ENCODE measurements at regions of chr12 and their contacts with region 1.

Region 1: GRCh38 chr12:42495244-42495643 is 94.3 kb downstream of the PRICKLE1 start:
- DNase-seq: no peak
- H3K4me3 ChIP-seq: no peak overlapping the region
- H3K27ac ChIP-seq: no peak overlapping the region
- H3K27me3 ChIP-seq: no peaks in the 10 kb centered on the region
- CTCF ChIP-seq: no peak

Region 2: GRCh38 chr12:41967668-41968500 is 527.4 kb before region 1 on chr12:
- CTCF ChIA-PET with region 1: no interaction called
- POLR2A ChIA-PET with region 1: no interaction called
- DNase-seq: no peak
- H3K4me3 ChIP-seq: no peak overlapping the region
- H3K27ac ChIP-seq: no peak overlapping the region
- H3K27me3 ChIP-seq: no peaks in the 10 kb centered on the region
- CTCF ChIP-seq: no peak

Region 3: DNA sequence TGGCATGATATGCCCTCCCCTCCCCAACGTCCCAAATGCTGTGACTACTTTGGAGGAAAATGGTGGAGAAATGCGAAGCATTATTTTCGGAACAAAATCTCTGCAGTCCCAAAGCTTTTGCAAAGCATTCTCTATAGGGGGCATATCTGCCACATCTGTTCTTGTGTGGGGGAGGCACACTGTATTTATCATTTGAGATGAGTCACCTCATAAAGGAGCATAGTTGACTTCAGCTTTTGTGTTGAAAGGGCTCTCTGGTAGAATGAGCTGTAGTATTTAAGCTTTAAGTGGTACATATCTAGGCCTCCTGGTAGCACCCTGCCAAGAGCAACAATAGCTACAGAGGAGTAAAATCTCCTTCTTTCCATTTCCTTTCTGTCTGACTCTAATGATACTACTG is 609.3 kb after region 1 on chr12:
- CTCF ChIA-PET with region 1: no interaction called
- POLR2A ChIA-PET with region 1: interaction called, 10 read pairs
- DNase-seq: no peak
- H3K4me3 ChIP-seq: no peak overlapping the region
- H3K27ac ChIP-seq: no peak overlapping the region
- H3K27me3 ChIP-seq: no peaks in the 10 kb centered on the region
- CTCF ChIP-seq: no peak